Vagina (tissue), 2 donors: ENCODE measurements at regions of chr1 and their contacts with region 1.

Region 1: DNA sequence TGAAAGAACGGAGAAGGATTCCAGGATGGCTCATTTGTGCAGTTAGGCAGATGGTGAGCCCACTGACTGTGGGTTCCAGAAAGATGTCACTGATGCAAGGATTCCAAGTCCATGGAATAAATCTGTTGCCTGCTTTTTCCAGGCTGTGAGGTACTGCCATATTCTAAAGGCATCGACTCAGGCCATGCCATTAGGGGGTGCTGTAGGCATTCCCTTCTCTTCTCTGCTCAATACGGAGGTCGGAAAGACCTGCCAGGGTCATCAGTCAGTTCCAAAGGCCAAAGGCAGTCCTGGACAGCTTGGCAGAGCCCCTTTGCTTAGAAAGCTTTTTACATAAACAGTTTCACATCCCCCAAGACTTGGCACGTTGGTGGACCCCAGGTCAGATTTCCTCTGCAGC is 31.7 kb upstream of the TMEM125 start:
- DNase-seq: no peak
- H3K4me3 ChIP-seq: no peak overlapping the region
- H3K27ac ChIP-seq: no peak overlapping the region
- H3K4me1 ChIP-seq: no peaks in the 10 kb centered on the region
- H3K27me3 ChIP-seq: no peaks in the 10 kb centered on the region
- CTCF ChIP-seq: peak; percentile 16 to 39 (median 32)
- POLR2A ChIP-seq: no peak

Region 2: DNA sequence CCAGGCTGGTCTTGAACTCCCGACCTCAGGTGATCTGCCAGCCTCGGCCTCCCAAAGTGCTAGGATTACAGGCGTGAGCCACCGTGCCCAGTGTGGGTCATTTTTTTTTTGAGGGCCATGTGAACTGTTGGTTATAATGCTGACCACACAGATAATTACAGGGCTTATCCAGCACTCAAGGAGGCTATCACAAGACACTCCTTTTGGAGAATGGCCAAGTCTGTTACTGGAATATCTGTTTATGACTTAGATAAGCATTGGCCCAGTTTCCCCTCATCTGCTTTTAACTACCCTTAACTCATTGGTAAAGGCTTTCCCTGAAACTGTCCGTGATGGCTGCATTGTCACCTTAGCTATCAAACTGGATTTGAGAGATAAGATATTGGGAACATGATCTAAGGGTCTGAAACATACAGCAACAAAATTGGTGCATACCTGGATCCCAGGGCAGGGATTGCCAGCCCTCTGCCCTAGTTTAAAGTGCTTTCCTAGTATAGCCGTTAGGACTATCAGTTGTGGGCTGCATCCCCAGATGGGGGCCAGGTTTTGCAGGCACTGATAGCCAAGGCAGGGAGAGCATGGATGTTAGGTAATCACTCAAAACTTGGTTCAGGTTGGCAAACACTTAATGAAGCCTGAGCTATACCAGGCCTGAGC is 167.3 kb after region 1 on chr1:
- intact Hi-C with region 1: loop called (anchors 5 kb)
- DNase-seq: no peak
- H3K4me3 ChIP-seq: no peak overlapping the region
- H3K27ac ChIP-seq: no peak overlapping the region
- H3K4me1 ChIP-seq: no peaks in the 10 kb centered on the region
- H3K27me3 ChIP-seq: no peaks in the 10 kb centered on the region
- CTCF ChIP-seq: no peak
- POLR2A ChIP-seq: no peak